Cardiac septum (tissue), 1 donor: ENCODE measurements at regions of chr7 and their contacts with region 1.

Region 1: DNA sequence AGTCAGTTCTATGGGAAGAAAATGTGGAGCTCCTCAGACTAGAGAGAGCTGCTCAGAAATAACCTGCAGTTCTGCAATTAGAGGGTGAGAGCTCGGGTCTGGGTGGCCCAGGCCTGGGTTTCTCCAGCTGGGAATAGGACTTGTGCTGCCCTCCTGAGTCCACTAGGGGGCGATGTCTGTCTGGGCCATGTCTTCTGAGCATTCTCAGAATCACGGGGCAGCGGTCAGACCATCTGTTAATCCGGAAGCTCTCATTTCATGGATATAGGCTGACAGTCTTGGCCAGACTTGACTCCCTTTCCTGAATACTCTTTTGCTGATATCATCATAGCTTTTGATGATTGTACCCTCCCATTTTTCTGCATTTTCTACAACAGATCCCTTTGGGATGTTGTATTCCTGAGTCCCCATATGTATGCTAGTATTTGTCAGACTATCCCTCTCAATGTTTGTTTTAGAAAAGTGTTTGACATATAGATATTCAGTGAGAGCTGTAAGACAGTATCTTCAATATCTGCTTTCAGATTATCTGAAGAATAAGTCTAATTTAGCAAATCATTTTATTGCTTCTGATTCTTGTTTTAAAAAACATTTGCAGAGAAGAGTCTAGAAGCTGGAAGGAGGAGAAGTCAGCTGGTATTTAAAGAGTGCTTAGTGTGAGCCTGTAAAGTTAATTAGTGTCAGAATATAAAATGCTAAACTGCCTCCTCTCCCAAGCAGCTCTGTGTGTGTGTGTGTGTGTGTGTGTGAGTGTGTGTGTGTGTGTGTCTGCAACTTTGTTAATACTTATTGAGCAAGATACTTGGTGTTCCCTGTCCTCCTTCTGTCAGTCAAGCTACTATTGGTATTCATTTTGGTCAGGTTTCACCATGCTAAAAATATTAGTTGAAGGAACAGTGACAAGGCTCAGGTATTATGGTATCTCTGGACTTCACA is 38.0 kb downstream of the STARD3NL start:
- DNase-seq: peak; percentile 89

Region 2: GRCh38 chr7:37901236-37901827 is 314.7 kb before region 1 on chr7:
- intact Hi-C with region 1: loop called (anchors 2 kb)
- DNase-seq: no peak

Region 3: GRCh38 chr7:38178004-38178694 is 37.9 kb before region 1 on chr7 and contains the start of gene STARD3NL:
- intact Hi-C with region 1: loop called (anchors 5 kb)
- DNase-seq: peak; percentile 96
- total RNA-seq, gene STARD3NL: 26.4 TPM